Activated CD4-positive, alpha-beta T cell treated with anti-CD3 and anti-CD28 coated beads for 36 hours (primary cell): ENCODE measurements at regions of chr3 and their contacts with region 1.

Region 1: GRCh38 chr3:4350789-4351163 is 47.6 kb downstream of the SETMAR start:
- DNase-seq: peak; percentile 66
- ATAC-seq: peak; percentile 67
- H3K4me3 Mint-ChIP-seq: peak overlapping the region; percentile 74
- H3K27ac Mint-ChIP-seq: peak overlapping the region; percentile 48
- H3K4me1 Mint-ChIP-seq: peaks cover 17% of the 10 kb centered on the region
- H3K27me3 Mint-ChIP-seq: no peaks in the 10 kb centered on the region

Region 2: DNA sequence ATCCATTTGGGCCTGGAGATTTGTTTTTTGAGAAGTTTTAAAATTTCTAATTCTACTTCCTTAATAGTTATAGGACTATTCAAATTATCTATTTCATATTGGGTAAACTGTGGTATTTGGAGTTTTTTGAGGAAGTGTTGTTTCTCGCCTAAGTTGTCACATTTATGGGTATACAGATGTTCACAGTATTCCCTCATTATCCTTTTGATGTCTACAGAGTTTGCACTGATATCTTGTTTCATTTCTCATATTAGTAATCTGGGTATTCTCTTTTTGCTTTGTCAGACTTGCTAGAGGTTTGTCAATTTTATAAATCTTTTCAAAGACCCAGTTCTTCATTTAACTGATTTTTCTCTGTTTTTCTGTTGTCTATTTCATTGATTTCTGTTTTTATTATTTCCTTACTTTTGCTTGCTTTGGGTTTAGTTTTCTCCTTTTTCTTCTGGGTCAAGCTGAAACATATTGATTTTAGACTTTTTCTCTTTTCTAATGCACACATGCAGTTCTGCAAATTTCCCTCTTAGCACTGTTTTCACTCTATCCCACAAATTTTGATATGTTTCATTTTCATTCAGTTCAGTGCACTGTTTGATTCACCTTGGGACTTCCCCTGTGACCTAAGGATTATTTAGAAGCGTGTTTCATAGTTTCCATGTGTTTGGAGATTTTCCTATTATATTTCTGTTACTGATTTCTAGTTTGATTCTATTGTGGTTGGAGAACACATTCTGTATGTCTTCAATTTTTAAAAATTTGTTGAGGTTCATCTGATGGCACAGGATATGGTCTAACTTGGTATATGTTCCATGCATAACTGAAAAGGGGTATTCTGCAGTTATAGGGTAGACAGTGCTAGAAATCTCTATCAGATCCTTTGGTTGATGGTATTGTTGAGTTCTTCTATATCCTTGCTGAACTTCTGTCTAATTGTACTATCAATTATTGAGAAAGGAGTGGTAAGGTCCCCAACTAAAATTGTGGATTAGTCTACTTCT is 36.7 kb after region 1 on chr3:
- CTCF ChIA-PET with region 1: interaction called, 3 read pairs
- POLR2A ChIA-PET with region 1: no interaction called
- intact Hi-C with region 1: loop called (anchors 1 kb)
- DNase-seq: no peak
- ATAC-seq: peak; percentile 91
- H3K4me3 Mint-ChIP-seq: peak overlapping the region; percentile 1
- H3K27ac Mint-ChIP-seq: peak overlapping the region; percentile 51
- H3K4me1 Mint-ChIP-seq: peaks cover 37% of the 10 kb centered on the region
- H3K27me3 Mint-ChIP-seq: no peaks in the 10 kb centered on the region

Region 3: GRCh38 chr3:4421121-4421520 is 70.3 kb after region 1 on chr3:
- CTCF ChIA-PET with region 1: interaction called, 3 read pairs
- POLR2A ChIA-PET with region 1: interaction called, 3 read pairs
- intact Hi-C with region 1: loop called (anchors 1 to 2 kb)
- DNase-seq: peak; percentile 49
- ATAC-seq: peak; percentile 89
- H3K4me3 Mint-ChIP-seq: no peak overlapping the region
- H3K27ac Mint-ChIP-seq: peak overlapping the region; percentile 62
- H3K4me1 Mint-ChIP-seq: peaks cover 34% of the 10 kb centered on the region
- H3K27me3 Mint-ChIP-seq: no peaks in the 10 kb centered on the region

Region 4: GRCh38 chr3:4517643-4518311 is 167.0 kb after region 1 on chr3:
- CTCF ChIA-PET with region 1: interaction called, 21 read pairs
- POLR2A ChIA-PET with region 1: interaction called, 4 read pairs
- intact Hi-C with region 1: loop called (anchors 1 to 5 kb)
- DNase-seq: no peak
- ATAC-seq: peak; percentile 28
- H3K4me3 Mint-ChIP-seq: no peak overlapping the region
- H3K27ac Mint-ChIP-seq: peak overlapping the region; percentile 82
- H3K4me1 Mint-ChIP-seq: peaks cover 35% of the 10 kb centered on the region
- H3K27me3 Mint-ChIP-seq: no peaks in the 10 kb centered on the region

Region 5: DNA sequence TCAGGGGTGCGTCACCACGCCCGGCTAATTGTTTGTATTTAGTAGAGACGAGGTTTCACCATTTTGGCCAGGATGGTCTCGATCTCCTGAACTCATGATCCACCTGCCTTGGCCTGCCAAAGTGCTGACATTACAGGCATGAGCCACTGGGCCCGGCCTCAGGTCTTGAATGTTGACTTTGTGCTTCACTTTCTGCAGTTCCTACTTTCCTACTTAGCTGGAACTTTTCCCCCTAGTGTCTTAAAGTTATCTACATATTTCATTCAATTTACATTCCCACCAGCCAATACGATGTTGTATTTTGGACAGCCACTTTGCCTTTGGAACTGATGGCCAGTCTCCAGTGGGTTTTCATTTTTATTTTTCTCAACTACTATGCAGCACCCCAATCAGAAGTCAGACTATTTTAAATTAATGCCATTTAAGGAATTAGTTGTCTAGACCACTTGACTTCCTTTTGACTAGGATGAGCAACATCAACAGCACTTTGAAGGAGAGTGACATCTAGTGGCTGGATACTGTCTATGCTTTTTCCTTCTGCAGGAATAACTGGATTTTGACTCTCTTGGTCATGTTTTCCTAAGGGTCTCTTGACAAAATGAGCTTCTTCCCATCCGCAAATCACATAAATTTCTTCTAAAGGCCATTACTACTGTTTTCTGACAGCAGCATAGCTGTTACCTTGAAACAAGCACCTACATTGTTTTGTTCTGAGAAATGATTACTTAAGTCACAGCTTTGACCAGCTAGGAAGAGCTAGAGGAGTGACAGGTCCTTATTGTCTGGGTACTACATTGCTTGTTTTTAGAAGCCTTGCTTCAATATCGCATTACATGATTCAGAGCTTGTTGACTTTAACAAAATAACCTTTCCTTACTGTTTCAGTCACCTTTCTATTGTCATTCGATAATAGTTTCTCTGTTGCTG is 282.6 kb after region 1 on chr3:
- CTCF ChIA-PET with region 1: interaction called, 59 read pairs
- POLR2A ChIA-PET with region 1: no interaction called
- intact Hi-C with region 1: loop called (anchors 1 kb)
- DNase-seq: no peak
- ATAC-seq: peak; percentile 57
- H3K4me3 Mint-ChIP-seq: no peak overlapping the region
- H3K27ac Mint-ChIP-seq: peak overlapping the region; percentile 37
- H3K4me1 Mint-ChIP-seq: peaks cover 6% of the 10 kb centered on the region
- H3K27me3 Mint-ChIP-seq: no peaks in the 10 kb centered on the region

Region 6: GRCh38 chr3:4850928-4851265 is 500.1 kb after region 1 on chr3:
- CTCF ChIA-PET with region 1: no interaction called
- POLR2A ChIA-PET with region 1: no interaction called
- intact Hi-C with region 1: loop called in 1 of 2 experiments (anchors 1 kb)
- DNase-seq: peak; percentile 56
- ATAC-seq: peak; percentile 72
- H3K4me3 Mint-ChIP-seq: peak overlapping the region; percentile 39
- H3K27ac Mint-ChIP-seq: peak overlapping the region; percentile 98
- H3K4me1 Mint-ChIP-seq: peaks cover 84% of the 10 kb centered on the region
- H3K27me3 Mint-ChIP-seq: no peaks in the 10 kb centered on the region